Calu3 (cell line): ENCODE measurements at regions of chr6 and their contacts with region 1.

Region 1: DNA sequence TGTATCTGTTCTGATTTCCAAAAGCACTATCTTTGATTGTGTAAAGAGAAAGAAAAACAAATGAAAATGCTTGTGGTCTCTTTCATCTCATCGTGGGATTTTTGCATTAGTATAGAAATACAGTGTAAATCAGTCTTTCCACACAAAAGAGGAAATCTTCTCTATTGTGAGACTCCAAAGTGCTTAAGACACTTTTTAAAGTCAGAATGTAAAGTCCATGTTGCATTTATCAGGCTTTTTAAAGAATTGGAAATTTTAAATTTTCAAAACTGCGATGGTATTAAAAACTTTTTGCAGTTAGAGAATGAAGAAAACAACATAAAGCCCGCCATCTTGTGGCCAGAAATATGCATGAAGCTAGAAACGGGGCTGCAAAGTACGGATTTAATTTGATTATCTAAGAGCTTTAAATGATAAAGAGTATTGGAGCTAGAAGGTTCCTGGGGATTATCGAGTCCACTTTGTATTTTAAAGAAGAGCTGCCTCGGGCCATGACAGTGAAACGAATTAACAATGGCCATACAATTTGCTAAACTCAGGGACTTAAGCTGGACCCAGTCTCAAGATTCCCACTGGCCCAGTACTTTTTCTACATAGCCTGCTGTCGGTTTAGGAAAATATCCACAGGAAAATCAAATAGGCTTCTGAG is 339.6 kb downstream of the ARHGAP18 start:
- DNase-seq: peak; percentile 41
- H3K4me3 Mint-ChIP-seq: no peak overlapping the region
- H3K27ac Mint-ChIP-seq: no peak overlapping the region
- H3K4me1 Mint-ChIP-seq: no peaks in the 10 kb centered on the region
- H3K27me3 Mint-ChIP-seq: no peaks in the 10 kb centered on the region
- CTCF ChIP-seq: peak; percentile 57

Region 2: DNA sequence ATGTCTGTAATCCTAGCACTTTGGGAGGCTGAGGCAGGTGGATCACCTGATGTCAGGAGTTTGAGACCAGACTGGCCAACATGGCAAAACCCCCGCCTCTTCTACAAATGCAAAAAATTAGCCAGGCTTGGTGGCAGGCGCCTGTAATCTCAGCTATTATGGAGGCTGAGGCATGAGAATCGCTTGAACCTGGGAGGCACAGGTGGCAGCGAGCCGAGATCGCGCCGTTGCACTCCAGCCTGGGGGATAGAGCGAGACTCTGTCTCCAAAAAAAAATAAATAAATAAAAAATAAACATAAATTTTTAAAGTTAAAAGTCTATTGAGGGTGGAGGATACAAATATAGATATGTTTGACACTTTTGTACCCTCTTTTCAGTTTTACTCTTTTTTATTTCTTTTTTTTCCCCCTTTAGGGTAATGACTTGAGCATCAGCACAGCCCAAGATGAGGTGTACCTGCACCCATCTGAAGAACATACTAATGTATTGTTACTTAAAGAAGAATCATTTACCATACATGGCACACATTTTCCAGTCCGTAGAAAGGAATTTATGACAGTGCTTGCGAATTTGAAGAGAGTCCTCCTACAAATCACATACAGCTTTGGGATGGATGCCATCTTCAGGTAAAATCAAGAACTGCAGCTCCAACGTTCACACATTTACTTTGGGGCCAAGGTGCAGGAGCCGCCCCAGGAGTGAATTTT is 118.6 kb before region 1 on chr6:
- CTCF ChIA-PET with region 1: interaction called, 4 read pairs
- intact Hi-C with region 1: loop called (anchors 5 kb)
- DNase-seq: peak; percentile 60
- H3K4me3 Mint-ChIP-seq: no peak overlapping the region
- H3K27ac Mint-ChIP-seq: no peak overlapping the region
- H3K4me1 Mint-ChIP-seq: peaks cover 21% of the 10 kb centered on the region
- H3K27me3 Mint-ChIP-seq: peaks cover 17% of the 10 kb centered on the region
- CTCF ChIP-seq: peak; percentile 77

Region 3: DNA sequence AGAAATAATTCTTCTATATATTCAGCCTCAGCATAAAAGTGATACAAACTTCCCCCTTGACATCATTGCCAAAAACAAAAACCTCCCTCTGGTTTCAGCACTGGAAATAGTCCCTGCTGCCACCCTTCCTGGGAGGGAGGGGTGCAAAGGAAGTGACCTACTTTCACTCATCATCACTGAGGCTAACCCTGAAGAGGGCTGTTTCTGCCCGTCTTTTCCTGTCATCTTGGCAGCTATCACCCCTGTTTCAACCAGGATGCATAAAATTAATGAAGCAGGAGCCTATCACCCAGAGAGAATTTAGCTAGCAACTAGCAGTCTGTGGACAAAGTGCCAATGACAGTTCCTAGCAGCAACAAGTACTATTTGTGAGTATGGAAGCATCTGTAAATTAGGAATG is 89.6 kb before region 1 on chr6:
- CTCF ChIA-PET with region 1: no interaction called
- intact Hi-C with region 1: no loop called
- DNase-seq: no peak
- H3K4me3 Mint-ChIP-seq: no peak overlapping the region
- H3K27ac Mint-ChIP-seq: no peak overlapping the region
- H3K4me1 Mint-ChIP-seq: no peaks in the 10 kb centered on the region
- H3K27me3 Mint-ChIP-seq: peaks cover 16% of the 10 kb centered on the region
- CTCF ChIP-seq: no peak